ENCODE measurements at regions of chr6 and their contacts with region 1.

Region 1: GRCh38 chr6:143450453-143451371 is at the starts of genes ADAT2 and PEX3:
- DNase-seq: peak; percentile 84 to 94
- H3K4me3 ChIP-seq: peak within 1 kb of the TSS; percentile 77
- H3K27ac ChIP-seq: peak within 1 kb of the TSS; percentile 47
- H3K4me1 ChIP-seq: peaks cover 22% of the 10 kb centered on the region
- H3K27me3 ChIP-seq: no peaks in the 10 kb centered on the region
- CTCF ChIP-seq: no peak
- total RNA-seq, gene ADAT2: 5.5 and 6.0 TPM in 2 replicates
- total RNA-seq, gene PEX3: 18.4 and 20.9 TPM in 2 replicates

Region 2: DNA sequence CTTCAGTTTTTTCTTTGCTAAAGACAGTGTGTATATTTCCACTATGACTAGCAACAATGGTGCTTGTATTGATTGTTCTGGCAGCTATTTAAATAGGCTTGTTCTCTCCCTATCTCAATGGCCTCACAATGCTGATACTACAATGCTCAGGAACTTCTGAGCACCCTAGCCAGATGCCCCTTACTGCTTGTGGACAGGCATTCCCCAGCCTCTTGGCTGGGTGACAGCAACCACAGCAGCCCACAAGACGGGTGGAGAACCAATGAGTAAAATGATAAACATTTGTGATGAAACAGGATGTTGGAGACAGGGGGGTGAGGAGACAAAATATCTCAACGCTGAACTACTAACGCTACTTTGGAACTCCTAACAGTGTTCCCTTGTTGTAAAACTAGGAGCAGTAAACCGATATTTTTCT is 548.1 kb before region 1 on chr6:
- CTCF ChIA-PET with region 1: no interaction called
- POLR2A ChIA-PET with region 1: no interaction called
- intact Hi-C with region 1: no loop called
- DNase-seq: peak; percentile 81 to 91
- H3K4me3 ChIP-seq: peak overlapping the region; percentile 40; the same call in 1 of the 2 replicates
- H3K27ac ChIP-seq: peak overlapping the region; percentile 82
- H3K4me1 ChIP-seq: peaks cover 38% of the 10 kb centered on the region
- H3K27me3 ChIP-seq: no peaks in the 10 kb centered on the region
- CTCF ChIP-seq: no peak

Region 3: DNA sequence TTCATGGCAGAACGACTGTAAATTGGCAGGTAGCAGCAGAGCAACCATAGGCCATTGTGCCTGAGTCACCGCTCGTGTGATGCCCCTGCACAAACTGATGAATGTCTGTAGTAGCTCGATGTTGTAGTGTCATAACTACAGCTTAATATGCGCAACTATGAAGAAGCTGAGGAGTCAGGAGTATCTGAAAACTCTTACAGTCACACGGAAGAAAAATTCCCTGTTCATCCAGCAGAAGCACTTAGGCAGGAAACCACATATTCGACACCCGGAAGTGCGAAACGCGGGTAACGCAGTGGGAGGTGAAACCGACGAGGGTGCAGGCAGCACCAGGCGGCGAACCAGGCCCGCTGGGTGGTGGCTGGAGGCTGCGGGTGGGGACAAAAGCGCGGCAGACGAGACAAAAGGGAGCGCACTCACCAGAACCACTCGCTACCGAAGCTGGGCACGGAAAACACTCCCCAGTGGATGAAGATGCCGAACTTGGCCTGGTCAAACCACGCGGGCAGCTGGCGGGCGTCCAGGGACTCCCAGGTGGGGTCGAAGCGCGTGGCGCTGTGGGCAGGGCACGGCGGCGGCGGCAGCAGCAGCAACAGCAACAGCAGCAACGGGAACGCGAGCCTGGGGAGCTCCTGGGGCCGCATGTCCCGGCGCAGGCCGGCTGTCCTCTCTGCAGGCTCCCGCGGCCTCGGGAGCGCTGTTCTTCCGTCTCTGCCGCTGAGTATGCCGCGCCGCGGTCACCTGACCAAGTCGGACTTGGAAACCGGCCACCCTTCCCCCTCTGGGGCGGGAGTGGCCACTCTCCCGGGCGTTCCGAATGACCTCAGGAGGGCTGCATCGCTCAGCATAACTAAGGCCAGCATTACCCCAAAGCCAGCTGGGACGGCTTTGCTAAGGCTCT is 60.5 kb after region 1 on chr6 and contains the start of gene FUCA2:
- CTCF ChIA-PET with region 1: no interaction called
- POLR2A ChIA-PET with region 1: interaction called, 5 read pairs
- intact Hi-C with region 1: loop called (anchors 2 kb)
- DNase-seq: peak; percentile 65 to 84
- H3K4me3 ChIP-seq: peak within 1 kb of the TSS; percentile 81
- H3K27ac ChIP-seq: peak within 1 kb of the TSS; percentile 71
- H3K4me1 ChIP-seq: peaks cover 21% of the 10 kb centered on the region
- H3K27me3 ChIP-seq: no peaks in the 10 kb centered on the region
- CTCF ChIP-seq: no peak
- total RNA-seq, gene FUCA2: 65.0 and 74.8 TPM in 2 replicates